ENCODE measurements at regions of chr17 and their contacts with region 1.

Region 1: DNA sequence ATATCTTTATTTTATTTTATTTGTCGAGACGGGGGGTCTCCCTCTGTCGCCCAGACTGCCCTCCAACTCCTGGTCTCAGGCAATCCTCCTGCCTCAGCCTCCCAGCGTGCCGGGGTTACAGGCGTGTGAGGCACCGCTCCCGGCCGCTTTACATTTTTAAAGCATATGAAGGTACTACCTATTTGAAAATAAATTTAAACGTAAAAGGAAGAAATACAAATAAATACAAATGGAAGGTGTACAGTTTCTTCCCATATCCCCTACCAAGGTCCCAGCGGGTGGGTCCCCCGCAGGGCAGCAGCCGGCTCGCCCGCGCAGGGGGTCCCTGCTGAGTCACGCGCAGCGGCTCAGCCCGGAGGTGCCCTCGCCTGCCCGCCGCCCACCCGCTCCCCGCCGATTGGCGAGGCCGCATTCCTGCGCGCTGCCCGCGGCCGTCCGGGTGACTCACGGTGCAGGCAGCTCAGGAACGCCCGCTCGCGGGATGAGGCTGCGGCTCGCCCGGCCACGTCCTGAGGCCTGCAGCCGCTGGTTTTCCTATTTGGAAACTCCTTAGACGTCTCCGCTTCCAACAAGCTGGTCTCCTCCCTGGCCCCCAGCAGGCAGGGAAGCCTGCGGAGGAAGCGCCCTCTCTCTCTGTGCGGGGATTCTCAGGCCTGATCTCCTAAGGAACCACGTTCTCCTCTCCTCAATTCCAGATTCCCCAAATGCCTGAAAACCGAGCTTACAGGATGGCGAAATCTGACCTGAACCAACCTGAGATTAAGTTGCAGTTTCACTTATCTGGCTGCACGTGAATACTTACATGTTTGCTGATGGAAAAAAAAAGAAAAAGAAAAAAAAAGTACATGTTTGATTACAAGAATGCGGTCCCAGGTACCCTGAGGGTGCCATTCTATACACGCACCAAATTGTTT is 54.9 kb upstream of the MAP3K14 start:
- DNase-seq: no peak
- ATAC-seq: no peak
- H3K4me3 ChIP-seq: no peak overlapping the region
- H3K27ac ChIP-seq: 0 out of 2 replicates have a peak overlapping the region, but pooled peaks have one; percentile 17
- H3K4me1 ChIP-seq: peaks cover 33% of the 10 kb centered on the region
- H3K27me3 ChIP-seq: no peaks in the 10 kb centered on the region
- CTCF ChIP-seq: no peak
- EP300 ChIP-seq: no peak
- POLR2A ChIP-seq: no peak
- RAD21 ChIP-seq: no peak

Region 2: DNA sequence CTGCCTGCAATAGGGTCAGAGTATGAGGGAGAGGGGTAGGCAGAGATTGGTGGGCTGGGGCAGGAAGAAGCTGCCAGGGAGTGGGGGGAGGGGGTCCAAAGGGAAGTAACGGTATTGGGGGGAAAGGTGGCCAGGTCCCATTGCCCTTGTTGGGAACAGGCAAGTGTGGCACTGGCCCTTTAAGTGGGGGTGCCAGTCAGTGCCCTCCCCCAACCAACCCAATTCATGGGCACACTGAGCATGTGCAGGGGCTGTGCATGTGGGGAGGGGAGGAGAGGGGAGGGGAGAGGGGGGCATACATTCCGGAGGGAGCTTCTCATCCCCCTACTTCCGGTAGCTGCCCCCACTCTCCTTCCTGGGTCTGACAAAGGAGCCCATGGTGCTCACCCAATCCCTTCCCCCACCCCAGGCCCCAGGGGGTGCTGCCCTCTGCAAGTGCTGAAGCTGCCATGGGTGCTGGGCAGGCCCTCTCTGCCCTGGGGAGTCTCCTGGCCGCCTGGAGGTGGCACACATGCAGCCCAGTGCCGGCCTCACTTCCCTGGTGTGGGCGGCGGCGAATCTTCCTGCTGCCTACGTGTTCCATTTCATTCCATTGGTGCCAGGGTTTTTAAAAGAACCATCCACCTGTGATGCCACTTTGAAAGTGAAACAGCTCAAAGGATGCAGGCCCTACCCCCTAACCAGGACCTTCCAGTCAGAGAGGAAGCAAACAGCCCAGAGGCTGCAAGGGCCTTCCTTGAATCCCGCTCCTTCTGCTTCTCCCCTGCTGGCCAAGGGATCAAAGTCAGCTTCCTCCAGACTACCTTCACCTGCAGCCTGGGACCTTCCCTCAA is 199.0 kb before region 1 on chr17:
- CTCF ChIA-PET with region 1: no interaction called
- POLR2A ChIA-PET with region 1: no interaction called
- RAD21 ChIA-PET with region 1: no interaction called
- SMC1A ChIA-PET with region 1: no interaction called
- in situ Hi-C with region 1: no loop called
- intact Hi-C with region 1: no loop called
- DNase-seq: no peak
- ATAC-seq: peak; percentile 93
- H3K4me3 ChIP-seq: peak overlapping the region; percentile 23
- H3K27ac ChIP-seq: peak overlapping the region; percentile 64
- H3K4me1 ChIP-seq: peaks cover 7% of the 10 kb centered on the region; the same call in 1 of the 2 replicates
- H3K27me3 ChIP-seq: no peaks in the 10 kb centered on the region
- CTCF ChIP-seq: no peak
- EP300 ChIP-seq: no peak
- POLR2A ChIP-seq: 0 out of 2 replicates have a peak, but pooled peaks have one; percentile 26
- RAD21 ChIP-seq: no peak

Region 3: DNA sequence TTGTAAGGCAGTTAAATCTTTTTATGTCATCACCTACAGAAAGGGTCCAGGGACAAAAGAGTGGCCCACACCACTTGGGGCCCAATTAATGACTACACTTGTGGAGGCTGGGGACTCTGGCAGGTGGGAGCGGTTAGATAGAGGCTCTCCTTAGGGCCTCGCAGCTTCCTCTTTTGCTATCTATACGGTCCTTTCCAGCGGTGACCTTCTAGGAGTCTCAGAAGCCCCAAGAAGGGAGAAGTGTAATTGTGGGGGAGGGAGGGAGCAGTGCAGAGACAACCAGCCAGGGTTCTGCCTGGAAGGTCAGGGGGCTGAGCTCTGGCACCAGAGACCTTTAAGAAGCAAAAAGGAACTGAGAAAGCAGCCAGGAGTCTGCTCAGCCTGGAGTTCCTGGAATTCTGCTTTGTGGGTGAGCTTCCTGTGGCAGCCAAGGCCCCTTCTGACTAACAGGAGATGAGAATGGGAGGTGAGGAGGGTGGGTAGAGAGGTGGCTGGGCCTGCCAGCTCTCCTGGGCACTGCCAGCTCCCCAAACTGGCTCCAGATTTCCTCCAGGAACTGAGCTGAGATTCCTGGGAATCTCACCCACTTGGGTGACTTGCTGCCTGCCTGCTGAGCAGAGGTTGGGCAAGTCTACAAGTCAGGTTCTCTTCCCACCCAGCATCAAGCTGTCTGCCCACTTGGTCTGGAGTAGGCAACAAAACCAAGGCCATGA is 38.5 kb before region 1 on chr17:
- CTCF ChIA-PET with region 1: interaction called, 4 read pairs
- POLR2A ChIA-PET with region 1: interaction called, 12 read pairs
- RAD21 ChIA-PET with region 1: interaction called, 6 read pairs
- SMC1A ChIA-PET with region 1: interaction called, 5 read pairs
- in situ Hi-C with region 1: no loop called
- intact Hi-C with region 1: no loop called
- DNase-seq: no peak
- ATAC-seq: peak; percentile 78
- H3K4me3 ChIP-seq: peak overlapping the region; percentile 3; the same call in 1 of the 2 replicates
- H3K27ac ChIP-seq: peak overlapping the region; percentile 33
- H3K4me1 ChIP-seq: peaks cover 43% of the 10 kb centered on the region
- H3K27me3 ChIP-seq: no peaks in the 10 kb centered on the region
- CTCF ChIP-seq: no peak
- EP300 ChIP-seq: peak in 1 of 2 experiments; percentile 42; a peak in 1 of 4 replicates
- POLR2A ChIP-seq: no peak
- RAD21 ChIP-seq: no peak

Measured in GM12878 (cell line).